ENCODE measurements at regions of chr3 and their contacts with region 1.

Region 1: DNA sequence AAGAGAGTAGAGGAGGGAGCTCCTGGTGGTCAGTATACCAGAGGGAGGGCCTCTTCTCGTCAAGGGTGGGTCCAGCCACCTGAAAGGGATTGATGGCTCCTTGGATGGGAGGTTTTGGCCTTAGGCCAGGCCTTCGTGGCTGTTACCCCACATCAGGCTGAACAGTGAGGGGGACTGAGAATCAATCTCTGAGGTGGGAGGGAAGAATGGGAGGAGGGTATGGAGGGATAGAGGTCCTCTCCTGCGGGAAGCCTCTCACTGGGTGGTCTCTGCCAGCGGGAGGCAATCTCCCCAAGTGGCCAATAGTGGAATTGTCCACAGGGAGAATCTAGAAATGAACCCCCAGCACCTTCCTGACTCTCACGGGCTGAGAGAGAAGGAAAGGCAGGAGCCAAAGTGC is 53.5 kb downstream of the BSN start:
- DNase-seq: no peak
- H3K4me3 ChIP-seq: no peak overlapping the region
- H3K27ac ChIP-seq: no peak overlapping the region
- H3K4me1 ChIP-seq: no peaks in the 10 kb centered on the region
- H3K27me3 ChIP-seq: no peaks in the 10 kb centered on the region
- CTCF ChIP-seq: no peak
- POLR2A ChIP-seq: no peak

Region 2: DNA sequence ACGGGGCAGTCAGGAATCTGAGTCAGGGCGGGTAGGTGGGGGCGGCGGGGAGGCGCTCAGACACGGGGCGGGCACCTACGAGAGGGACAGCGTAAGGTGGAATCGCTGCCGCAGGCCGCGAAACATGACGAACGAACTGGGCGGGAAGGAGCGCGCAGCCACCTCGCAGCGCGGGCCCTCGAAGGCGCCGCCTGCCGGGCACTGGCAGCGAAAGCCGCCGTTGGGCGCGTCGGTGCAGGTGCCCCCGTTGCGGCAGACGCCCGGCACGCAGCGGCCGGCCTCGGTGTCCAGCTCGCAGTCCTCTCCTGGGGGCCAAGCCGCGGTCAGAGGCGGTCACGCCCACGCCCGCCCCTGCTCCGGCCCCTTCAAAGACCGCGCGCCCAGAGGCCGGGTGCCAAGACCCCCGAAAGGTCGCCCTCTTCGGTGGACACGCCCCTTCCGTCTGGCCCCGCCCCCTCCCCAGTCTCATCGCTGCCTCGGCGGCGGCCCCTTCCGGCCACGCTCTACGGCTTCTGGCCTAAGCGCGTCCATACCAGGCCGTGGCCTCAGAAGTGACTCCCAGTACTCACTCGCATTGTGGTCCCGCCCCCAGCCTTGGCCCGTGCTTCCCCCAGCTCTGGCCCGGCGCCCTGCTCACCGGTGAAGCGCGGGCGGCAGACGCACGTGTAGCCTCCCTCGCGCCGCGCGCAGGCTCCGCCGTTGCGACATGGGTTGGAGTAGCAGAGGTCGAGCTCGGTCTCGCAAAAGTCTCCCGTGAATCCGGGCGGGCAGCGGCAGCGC is 951.5 kb before region 1 on chr3:
- intact Hi-C with region 1: loop called (anchors 10 kb)
- DNase-seq: peak; percentile 75 to 76
- H3K4me3 ChIP-seq: peak overlapping the region; percentile 51 to 84 (median 70)
- H3K27ac ChIP-seq: peak overlapping the region; percentile 76 to 86
- H3K4me1 ChIP-seq: no peaks in the 10 kb centered on the region
- H3K27me3 ChIP-seq: peaks cover 0 to 11% of the 10 kb centered on the region in 2 donors
- CTCF ChIP-seq: peak; percentile 29 to 66 (median 29)
- POLR2A ChIP-seq: no peak

Region 3: GRCh38 chr3:49217688-49218470 is 389.9 kb before region 1 on chr3:
- intact Hi-C with region 1: no loop called
- DNase-seq: no peak
- H3K4me3 ChIP-seq: no peak overlapping the region
- H3K27ac ChIP-seq: peak overlapping the region; percentile 74 to 88
- H3K4me1 ChIP-seq: peaks cover 0 to 5% of the 10 kb centered on the region in 2 donors
- H3K27me3 ChIP-seq: no peaks in the 10 kb centered on the region
- CTCF ChIP-seq: no peak
- POLR2A ChIP-seq: no peak

Measured in breast epithelium (tissue), 4 donors.